ENCODE measurements at regions of chr1 and their contacts with region 1.

Region 1: DNA sequence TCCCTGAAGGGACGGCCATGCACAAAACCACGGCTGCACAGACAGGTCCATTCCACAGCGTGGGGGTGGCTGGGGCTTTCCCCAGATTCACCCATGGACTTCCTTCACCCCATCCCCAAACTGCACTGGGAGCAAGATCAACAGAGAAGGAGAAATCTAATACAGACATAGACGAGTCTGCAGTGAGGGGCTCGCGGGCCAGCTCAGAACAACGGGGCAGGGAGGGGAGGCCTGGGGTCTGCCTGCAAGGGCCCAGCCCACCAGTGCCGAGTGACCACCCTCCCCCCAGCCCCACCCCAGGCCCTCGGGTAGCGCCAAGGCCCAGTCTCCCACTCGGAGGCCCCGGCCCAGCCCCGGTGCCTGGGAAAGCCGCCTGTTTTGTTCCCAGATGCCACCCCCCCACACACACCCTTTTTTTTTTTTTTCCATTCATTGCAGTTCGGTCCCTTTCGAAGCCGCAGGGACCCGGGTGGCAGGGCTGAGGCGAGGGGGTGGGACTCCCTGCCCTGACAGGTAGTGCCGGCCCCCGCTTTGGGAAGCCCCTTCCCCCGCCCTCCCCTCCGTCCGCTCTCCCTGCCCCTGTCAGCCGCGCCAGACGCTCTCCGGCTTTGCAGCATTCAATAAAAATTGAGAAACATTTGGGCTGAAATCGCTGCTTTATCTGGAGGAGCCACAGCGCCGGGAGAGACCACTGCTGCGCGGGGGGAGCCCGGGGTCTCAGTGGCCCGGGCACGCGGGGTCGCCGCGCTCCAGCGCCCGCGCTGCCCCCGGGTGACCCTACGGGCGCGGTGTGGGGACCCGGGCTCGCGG is 543 bp upstream of the EPHB2 start:
- DNase-seq: peak; percentile 49
- H3K4me3 ChIP-seq: peak overlapping the region; percentile 29 to 50 (median 33)
- H3K27ac ChIP-seq: peak overlapping the region; percentile 61
- H3K4me1 ChIP-seq: peaks cover 20% of the 10 kb centered on the region
- H3K27me3 ChIP-seq: no peaks in the 10 kb centered on the region
- CTCF ChIP-seq: no peak
- POLR2A ChIP-seq: no peak

Region 2: GRCh38 chr1:22216210-22216883 is 493.7 kb before region 1 on chr1:
- CTCF ChIA-PET with region 1: no interaction called
- POLR2A ChIA-PET with region 1: no interaction called
- dilution Hi-C with region 1: no loop called
- intact Hi-C with region 1: no loop called
- DNase-seq: no peak
- H3K4me3 ChIP-seq: no peak overlapping the region
- H3K27ac ChIP-seq: no peak overlapping the region
- H3K4me1 ChIP-seq: no peaks in the 10 kb centered on the region
- H3K27me3 ChIP-seq: peaks cover 23 to 43% of the 10 kb centered on the region in 2 experiments
- CTCF ChIP-seq: no peak
- POLR2A ChIP-seq: no peak

Region 3: DNA sequence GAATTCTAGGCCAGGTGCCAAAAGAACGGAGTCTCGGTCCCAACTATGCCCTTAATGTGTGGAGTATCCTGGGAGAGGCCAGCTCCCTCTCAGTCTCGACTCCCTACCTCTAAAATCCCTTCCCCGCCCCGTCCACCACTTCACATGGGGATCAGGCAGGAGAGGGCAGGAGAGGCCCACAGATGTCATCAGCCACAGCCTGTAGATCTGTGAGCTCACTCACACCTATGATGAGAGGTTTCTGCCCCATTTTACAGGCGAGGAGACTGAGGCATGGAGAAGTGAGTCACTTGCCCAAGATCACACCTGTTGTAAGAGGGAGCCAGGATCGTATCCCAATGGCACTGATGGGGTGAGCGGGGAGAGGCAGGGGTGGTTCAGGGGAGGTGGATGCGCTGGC is 167.2 kb before region 1 on chr1:
- CTCF ChIA-PET with region 1: no interaction called
- POLR2A ChIA-PET with region 1: no interaction called
- dilution Hi-C with region 1: no loop called
- intact Hi-C with region 1: no loop called
- DNase-seq: no peak
- H3K4me3 ChIP-seq: no peak overlapping the region
- H3K27ac ChIP-seq: no peak overlapping the region
- H3K4me1 ChIP-seq: no peaks in the 10 kb centered on the region
- H3K27me3 ChIP-seq: peaks cover 4 to 9% of the 10 kb centered on the region in 2 experiments
- CTCF ChIP-seq: no peak
- POLR2A ChIP-seq: no peak

Region 4: DNA sequence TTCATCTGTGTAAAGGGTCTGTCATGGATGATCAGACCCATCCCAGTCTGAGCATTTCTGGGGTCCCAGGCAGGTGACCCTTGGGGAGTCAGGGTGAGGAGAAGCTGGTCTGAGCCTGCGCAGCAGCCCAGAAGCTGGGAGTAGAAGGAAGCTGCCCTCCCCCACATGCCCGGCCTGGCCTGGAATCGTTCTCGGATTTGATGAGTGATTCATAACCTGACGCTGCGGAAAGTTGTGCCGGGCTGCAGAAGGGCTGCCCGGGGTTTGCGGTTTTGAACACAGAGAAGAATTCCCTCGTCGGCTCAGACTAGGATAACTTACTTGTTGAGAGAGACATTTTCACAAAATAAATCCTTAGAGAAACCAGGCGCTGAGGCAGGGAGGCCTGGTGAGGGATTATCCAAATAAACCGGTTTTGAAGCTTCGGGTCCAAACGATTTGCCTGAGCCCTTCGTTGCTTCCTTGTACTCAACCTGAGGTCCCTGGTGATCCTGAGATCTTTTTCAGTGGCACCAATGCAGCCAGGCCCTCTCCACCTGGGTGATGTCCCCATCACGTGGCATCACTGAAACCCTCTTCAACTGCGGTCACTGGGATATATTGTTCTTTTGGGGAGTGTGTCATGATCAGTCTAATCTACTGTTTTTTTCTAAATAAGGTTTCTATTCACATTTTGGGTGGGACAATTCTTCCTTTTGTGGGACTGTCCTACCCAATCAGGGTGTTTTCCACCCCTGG is 29.7 kb after region 1 on chr1:
- CTCF ChIA-PET with region 1: interaction called, 26 read pairs
- POLR2A ChIA-PET with region 1: no interaction called
- dilution Hi-C with region 1: no loop called
- intact Hi-C with region 1: loop called (anchors 2 kb)
- DNase-seq: peak; percentile 81
- H3K4me3 ChIP-seq: no peak overlapping the region
- H3K27ac ChIP-seq: peak overlapping the region; percentile 78
- H3K4me1 ChIP-seq: peaks cover 52% of the 10 kb centered on the region
- H3K27me3 ChIP-seq: no peaks in the 10 kb centered on the region
- CTCF ChIP-seq: no peak
- POLR2A ChIP-seq: no peak

Region 5: GRCh38 chr1:22749919-22750688 is 40.0 kb after region 1 on chr1:
- CTCF ChIA-PET with region 1: interaction called, 21 read pairs
- POLR2A ChIA-PET with region 1: interaction called, 4 read pairs
- dilution Hi-C with region 1: no loop called
- intact Hi-C with region 1: loop called (anchors 2 kb)
- DNase-seq: peak; percentile 95
- H3K4me3 ChIP-seq: no peak overlapping the region
- H3K27ac ChIP-seq: peak overlapping the region; percentile 90
- H3K4me1 ChIP-seq: peaks cover 78% of the 10 kb centered on the region
- H3K27me3 ChIP-seq: no peaks in the 10 kb centered on the region
- CTCF ChIP-seq: no peak
- POLR2A ChIP-seq: peak; percentile 68

Measured in endothelial cell of umbilical vein (primary cell).